Activated naive CD4-positive, alpha-beta T cell treated with anti-CD3 and anti-CD28 coated beads for 36 hours (primary cell): ENCODE measurements at regions of chr15 and their contacts with region 1.

Region 1: GRCh38 chr15:38002883-38003477 is 68.5 kb downstream of the TMCO5A start:
- DNase-seq: peak; percentile 38
- H3K4me3 Mint-ChIP-seq: no peak overlapping the region
- H3K27ac Mint-ChIP-seq: no peak overlapping the region
- H3K4me1 Mint-ChIP-seq: no peaks in the 10 kb centered on the region
- H3K27me3 Mint-ChIP-seq: no peaks in the 10 kb centered on the region

Region 2: DNA sequence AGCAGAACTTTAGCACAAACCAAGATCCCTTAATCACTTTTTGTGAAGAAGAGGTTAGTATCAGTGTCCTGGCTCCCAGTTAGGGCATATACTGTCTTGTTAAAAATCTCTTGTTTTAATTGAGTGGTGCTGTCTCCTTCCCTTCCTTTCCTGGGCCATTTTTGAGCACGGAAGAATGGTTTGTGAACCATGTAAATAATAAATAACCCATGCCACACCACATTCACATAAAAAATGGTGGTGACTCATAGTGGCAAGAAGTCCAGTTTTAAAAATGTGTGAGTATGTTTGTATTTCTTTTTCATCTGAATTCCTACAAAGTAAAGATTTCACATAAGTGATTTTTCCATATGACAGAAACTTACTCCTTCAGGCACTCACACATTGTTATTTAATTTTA is 190.5 kb after region 1 on chr15:
- CTCF ChIA-PET with region 1: no interaction called
- intact Hi-C with region 1: loop called (anchors 5 kb)
- DNase-seq: no peak
- H3K4me3 Mint-ChIP-seq: no peak overlapping the region
- H3K27ac Mint-ChIP-seq: no peak overlapping the region
- H3K4me1 Mint-ChIP-seq: no peaks in the 10 kb centered on the region
- H3K27me3 Mint-ChIP-seq: peaks cover 4% of the 10 kb centered on the region

Region 3: GRCh38 chr15:38389924-38390542 is 387.1 kb after region 1 on chr15:
- CTCF ChIA-PET with region 1: no interaction called
- intact Hi-C with region 1: loop called (anchors 2 kb)
- DNase-seq: peak; percentile 80
- H3K4me3 Mint-ChIP-seq: no peak overlapping the region
- H3K27ac Mint-ChIP-seq: no peak overlapping the region
- H3K4me1 Mint-ChIP-seq: no peaks in the 10 kb centered on the region
- H3K27me3 Mint-ChIP-seq: peaks cover 16% of the 10 kb centered on the region